ENCODE measurements at regions of chr6 and their contacts with region 1.

Region 1: DNA sequence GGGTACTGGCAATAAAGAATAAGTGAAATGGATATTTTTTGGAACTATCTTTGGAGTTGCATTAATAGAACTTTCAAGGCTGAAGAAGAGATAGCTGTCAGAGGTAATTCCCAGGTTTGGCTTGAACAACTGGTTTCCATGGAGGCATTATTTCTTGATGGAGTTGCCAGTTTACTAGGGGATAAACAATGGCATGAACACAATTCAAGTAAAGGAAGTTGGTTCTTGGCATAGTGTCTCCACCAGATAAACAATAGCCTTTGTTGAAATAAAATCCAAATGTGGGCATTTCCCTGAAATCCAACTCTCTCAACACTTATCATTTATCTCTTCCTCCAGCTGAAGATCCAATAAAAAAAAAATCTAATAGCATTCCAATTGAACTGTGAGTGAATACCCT is 454.9 kb downstream of the C6orf118 start:
- DNase-seq: no peak
- H3K4me3 ChIP-seq: no peak overlapping the region
- H3K27ac ChIP-seq: no peak overlapping the region
- H3K4me1 ChIP-seq: no peaks in the 10 kb centered on the region
- H3K27me3 ChIP-seq: no peaks in the 10 kb centered on the region
- CTCF ChIP-seq: no peak

Region 2: GRCh38 chr6:164763788-164764187 is 90.7 kb before region 1 on chr6:
- CTCF ChIA-PET with region 1: no interaction called
- POLR2A ChIA-PET with region 1: no interaction called
- intact Hi-C with region 1: no loop called
- DNase-seq: no peak
- H3K4me3 ChIP-seq: no peak overlapping the region
- H3K27ac ChIP-seq: no peak overlapping the region
- H3K4me1 ChIP-seq: no peaks in the 10 kb centered on the region
- H3K27me3 ChIP-seq: no peaks in the 10 kb centered on the region
- CTCF ChIP-seq: no peak

Region 3: DNA sequence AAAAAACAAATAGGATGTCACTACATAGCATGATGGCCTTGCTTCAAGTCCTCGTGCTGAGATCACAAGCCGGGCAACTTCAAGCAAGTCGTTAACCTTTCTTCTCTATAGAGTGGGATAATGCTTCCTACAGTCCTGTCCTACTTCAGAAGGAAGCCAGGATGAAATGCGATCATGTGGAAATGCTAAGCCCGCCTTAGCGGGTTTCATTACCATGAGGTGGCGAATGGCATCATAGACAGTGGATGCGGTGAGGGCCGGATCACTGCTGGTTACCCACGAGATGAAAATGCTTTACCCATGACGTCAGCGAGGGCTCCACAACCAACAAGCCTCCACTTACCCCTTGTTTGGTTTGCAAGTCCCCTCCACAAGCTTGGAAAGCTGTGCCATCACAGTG is 1106.7 kb after region 1 on chr6:
- CTCF ChIA-PET with region 1: no interaction called
- POLR2A ChIA-PET with region 1: no interaction called
- intact Hi-C with region 1: loop called (anchors 5 kb)
- DNase-seq: no peak
- H3K4me3 ChIP-seq: no peak overlapping the region
- H3K27ac ChIP-seq: no peak overlapping the region
- H3K4me1 ChIP-seq: no peaks in the 10 kb centered on the region
- H3K27me3 ChIP-seq: no peaks in the 10 kb centered on the region
- CTCF ChIP-seq: no peak